ENCODE measurements at regions of chr5 and their contacts with region 1.

Region 1: GRCh38 chr5:72816311-72817145 is at the start of gene TNPO1:
- DNase-seq: peak; percentile 82

Region 2: DNA sequence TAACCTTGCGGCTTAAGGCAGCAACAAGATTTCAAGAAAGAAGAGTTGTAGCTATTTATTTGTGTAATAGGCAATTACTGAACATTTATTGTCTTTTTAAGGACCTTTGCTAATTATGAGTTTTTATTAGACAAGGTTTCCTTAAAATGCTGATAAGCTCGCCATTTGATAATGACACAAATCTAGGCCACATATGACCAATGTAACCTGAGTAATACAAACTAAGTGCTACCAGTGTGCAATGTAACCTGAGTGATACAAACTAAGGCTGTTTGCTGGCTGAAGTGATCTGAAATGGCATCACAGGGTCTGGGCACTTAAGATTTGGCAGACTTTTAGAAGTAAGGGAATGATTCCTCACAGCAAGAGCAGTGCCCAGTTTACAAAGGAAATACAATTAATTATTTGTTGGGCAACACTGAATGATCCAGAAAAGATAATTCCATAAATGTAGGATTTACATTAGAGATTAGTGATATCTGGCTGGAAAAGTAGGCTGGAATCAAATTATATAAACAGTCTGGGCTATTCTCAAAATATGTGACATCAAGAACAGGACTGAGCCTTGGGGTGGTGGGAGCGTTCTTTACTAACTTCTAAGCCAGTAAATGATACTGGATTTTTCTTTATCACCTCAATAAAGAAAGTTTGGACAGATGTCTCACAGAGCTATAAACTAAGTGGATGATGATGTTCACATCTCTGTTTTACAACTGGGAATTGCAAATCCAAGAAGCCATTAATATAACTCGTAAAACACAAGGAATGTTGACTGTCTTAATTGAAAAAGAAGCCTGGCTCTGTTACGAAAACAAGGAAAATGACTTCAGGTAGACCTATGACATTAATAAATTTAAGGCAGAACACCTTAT is 551.3 kb before region 1 on chr5:
- CTCF ChIA-PET with region 1: no interaction called
- POLR2A ChIA-PET with region 1: no interaction called
- DNase-seq: no peak

Region 3: GRCh38 chr5:72611118-72611730 is 205.3 kb before region 1 on chr5:
- CTCF ChIA-PET with region 1: interaction called, 15 read pairs
- POLR2A ChIA-PET with region 1: interaction called, 5 read pairs
- DNase-seq: peak; percentile 79

Region 4: DNA sequence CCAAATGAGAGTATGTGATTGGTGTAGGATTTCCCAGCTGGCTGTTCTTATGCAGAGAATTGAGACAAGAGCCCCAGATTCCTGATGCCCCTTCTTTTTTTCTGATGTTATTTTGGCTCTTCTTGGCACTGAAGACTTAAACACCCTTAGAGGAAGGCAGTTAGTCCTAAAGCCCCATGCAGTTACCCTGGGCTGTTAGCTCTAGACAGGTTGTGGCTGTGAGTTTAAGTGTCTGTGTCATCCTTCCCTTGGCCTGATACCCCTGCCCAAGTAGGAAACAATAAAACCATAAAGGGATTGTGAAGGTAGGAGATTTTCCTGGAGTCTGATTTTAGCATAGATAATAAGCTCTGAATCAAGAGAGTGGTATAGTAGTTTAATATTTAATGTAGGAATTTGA is 13.2 kb after region 1 on chr5:
- CTCF ChIA-PET with region 1: interaction called, 12 read pairs
- POLR2A ChIA-PET with region 1: no interaction called
- DNase-seq: no peak

Measured in HEK293T (cell line).